ENCODE measurements at regions of chr1 and their contacts with region 1.

Region 1: DNA sequence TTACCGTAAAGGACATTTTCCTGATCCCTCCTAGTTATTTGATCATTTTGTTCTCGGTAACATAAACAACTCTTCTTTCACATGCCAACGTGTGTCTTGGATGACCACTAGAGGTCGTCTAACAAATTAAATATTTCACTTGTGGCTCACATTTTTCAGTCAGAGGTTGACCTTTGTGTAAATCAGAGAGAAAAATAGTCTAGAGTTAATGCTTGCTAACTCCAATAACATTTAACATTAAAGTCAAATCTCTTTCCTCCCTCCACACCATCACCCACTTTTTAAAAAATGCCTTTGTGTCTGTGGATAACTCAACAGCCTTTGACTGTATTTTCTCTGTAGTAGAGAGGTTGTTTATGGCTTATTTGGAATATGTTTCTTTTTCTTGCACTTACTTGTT is 220.5 kb upstream of the B3GALT2 start:
- DNase-seq: no peak
- ATAC-seq: peak; percentile 29 to 45

Region 2: DNA sequence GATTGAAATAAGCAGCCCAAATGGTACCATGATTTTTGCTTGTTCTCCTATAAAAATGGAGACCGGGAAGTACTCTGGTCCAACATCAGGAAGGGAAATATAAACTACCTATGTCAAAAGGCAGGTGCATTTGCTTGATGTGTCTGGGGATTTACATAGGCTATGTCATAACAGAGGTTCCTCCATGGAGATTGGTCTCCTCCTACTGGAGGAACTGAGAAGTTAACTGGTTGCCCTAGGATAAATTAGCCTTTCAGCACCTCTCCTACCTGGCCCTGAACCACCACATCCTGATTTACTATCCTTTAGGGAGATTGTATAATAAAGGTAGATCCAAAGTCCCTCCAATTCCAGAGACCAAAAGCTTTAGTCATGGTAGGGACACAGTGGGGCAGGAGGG is 888.8 kb after region 1 on chr1:
- intact Hi-C with region 1: loop called in 1 of 2 experiments (anchors 5 kb)
- DNase-seq: no peak
- ATAC-seq: peak in 1 of 2 donors; percentile 90

Measured in left cardiac atrium (tissue), 4 donors.